ENCODE measurements at regions of chr7 and their contacts with region 1.

Region 1: GRCh38 chr7:128031901-128032604 is 816 bp upstream of the LRRC4 start:
- DNase-seq: peak; percentile 81
- H3K4me3 Mint-ChIP-seq: peak overlapping the region; percentile 74
- H3K27ac Mint-ChIP-seq: no peak overlapping the region
- H3K4me1 Mint-ChIP-seq: peaks cover 13% of the 10 kb centered on the region
- H3K27me3 Mint-ChIP-seq: peaks cover 6% of the 10 kb centered on the region

Region 2: GRCh38 chr7:127392566-127393367 is 639.3 kb before region 1 on chr7 and contains the start of gene ZNF800:
- CTCF ChIA-PET with region 1: no interaction called
- intact Hi-C with region 1: loop called (anchors 10 kb)
- DNase-seq: peak; percentile 89
- H3K4me3 Mint-ChIP-seq: peak within 1 kb of the TSS; percentile 95
- H3K27ac Mint-ChIP-seq: peak within 1 kb of the TSS; percentile 93
- H3K4me1 Mint-ChIP-seq: peaks cover 61% of the 10 kb centered on the region
- H3K27me3 Mint-ChIP-seq: no peaks in the 10 kb centered on the region
- total RNA-seq, gene ZNF800: 18.2 to 19.5 TPM

Region 3: DNA sequence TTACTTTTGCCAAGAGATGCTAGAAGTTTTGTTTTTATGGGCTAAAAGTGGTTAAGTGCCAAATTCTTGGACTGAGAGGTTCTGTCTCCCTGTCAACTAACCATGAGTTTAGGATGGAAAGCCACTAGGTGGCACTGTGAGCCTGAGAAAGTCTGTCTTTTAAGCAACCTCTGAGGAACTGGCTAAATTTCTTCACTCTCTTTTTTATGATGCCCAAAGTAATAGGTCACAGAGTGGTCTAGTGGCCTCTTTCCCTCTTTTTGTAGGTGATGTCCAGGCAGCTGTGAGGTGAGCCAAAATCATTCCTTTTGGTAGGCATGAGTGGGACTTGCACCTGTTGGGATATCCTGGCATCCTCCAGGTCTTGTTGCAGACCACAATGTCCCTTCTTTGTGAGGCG is 323.3 kb before region 1 on chr7:
- CTCF ChIA-PET with region 1: no interaction called
- intact Hi-C with region 1: loop called (anchors 1 kb)
- DNase-seq: peak; percentile 89
- H3K4me3 Mint-ChIP-seq: no peak overlapping the region
- H3K27ac Mint-ChIP-seq: no peak overlapping the region
- H3K4me1 Mint-ChIP-seq: peaks cover 9% of the 10 kb centered on the region
- H3K27me3 Mint-ChIP-seq: no peaks in the 10 kb centered on the region

Region 4: GRCh38 chr7:127858091-127858914 is 173.8 kb before region 1 on chr7:
- CTCF ChIA-PET with region 1: no interaction called
- intact Hi-C with region 1: loop called (anchors 2 kb)
- DNase-seq: no peak
- H3K4me3 Mint-ChIP-seq: no peak overlapping the region
- H3K27ac Mint-ChIP-seq: no peak overlapping the region
- H3K4me1 Mint-ChIP-seq: peaks cover 54% of the 10 kb centered on the region
- H3K27me3 Mint-ChIP-seq: no peaks in the 10 kb centered on the region

Region 5: GRCh38 chr7:128108641-128109423 is 76.8 kb after region 1 on chr7:
- CTCF ChIA-PET with region 1: no interaction called
- intact Hi-C with region 1: loop called (anchors 1 kb)
- DNase-seq: peak; percentile 45
- H3K4me3 Mint-ChIP-seq: no peak overlapping the region
- H3K27ac Mint-ChIP-seq: peak overlapping the region; percentile 62
- H3K4me1 Mint-ChIP-seq: peaks cover 66% of the 10 kb centered on the region
- H3K27me3 Mint-ChIP-seq: peaks cover under 1% of the 10 kb centered on the region

Measured in activated naive CD4-positive, alpha-beta T cell treated with anti-CD3 and anti-CD28 coated beads for 36 hours (primary cell).